ENCODE measurements at regions of chr10 and their contacts with region 1.

Region 1: GRCh38 chr10:16011548-16011947 is 151.2 kb upstream of the MINDY3 start:
- DNase-seq: peak; percentile 12
- H3K4me3 ChIP-seq: no peak overlapping the region
- H3K27ac ChIP-seq: no peak overlapping the region
- H3K4me1 ChIP-seq: no peaks in the 10 kb centered on the region
- H3K27me3 ChIP-seq: no peaks in the 10 kb centered on the region
- CTCF ChIP-seq: no peak

Region 2: DNA sequence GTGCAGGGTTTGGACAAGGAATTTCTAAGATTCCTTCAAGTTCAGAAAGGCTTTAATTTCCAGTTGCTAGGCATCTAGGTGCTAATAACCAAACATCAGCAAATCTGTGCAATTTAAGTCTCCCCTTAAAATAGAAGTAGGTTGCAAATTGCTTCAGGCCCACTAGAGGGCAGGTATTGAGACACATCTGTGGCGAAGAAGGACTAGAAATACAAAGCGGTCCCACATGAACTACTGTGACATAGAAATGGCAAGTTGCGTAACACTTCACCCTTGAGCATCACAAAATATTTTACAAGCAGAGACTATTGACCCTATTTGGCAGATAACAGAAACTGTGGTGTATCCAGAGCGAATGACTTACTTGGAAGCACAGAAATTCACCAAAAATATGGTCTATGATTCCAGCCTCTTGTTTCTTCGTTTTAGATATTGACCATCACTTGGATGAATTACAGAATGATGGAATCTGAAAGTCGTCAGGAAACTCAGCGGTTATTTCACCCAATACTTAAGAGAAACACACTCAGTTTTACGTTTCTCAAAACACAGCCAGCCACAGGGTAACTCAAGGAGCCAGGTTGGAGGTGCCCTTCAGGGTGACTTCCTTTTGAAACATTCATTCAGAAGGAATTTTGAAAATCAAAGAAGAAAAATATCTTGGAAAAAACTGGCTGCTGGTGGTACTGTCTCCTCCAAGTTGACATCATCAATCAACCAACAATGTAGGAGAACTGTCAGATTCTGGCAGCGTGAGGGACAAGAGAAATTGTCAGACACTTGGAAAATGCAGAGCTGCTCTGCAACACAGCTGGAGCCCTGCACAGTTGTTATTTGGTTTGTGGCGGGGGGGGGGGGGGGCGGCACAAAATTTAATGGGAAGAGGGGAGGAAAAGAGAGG is 105.1 kb after region 1 on chr10:
- CTCF ChIA-PET with region 1: no interaction called
- dilution Hi-C with region 1: loop called (anchors 5 kb)
- in situ Hi-C with region 1: no loop called
- intact Hi-C with region 1: no loop called
- DNase-seq: peak; percentile 20
- H3K4me3 ChIP-seq: no peak overlapping the region
- H3K27ac ChIP-seq: no peak overlapping the region
- H3K4me1 ChIP-seq: no peaks in the 10 kb centered on the region
- H3K27me3 ChIP-seq: no peaks in the 10 kb centered on the region
- CTCF ChIP-seq: peak; percentile 53 to 67